SK-N-SH (cell line): ENCODE measurements at regions of chr3 and their contacts with region 1.

Region 1: DNA sequence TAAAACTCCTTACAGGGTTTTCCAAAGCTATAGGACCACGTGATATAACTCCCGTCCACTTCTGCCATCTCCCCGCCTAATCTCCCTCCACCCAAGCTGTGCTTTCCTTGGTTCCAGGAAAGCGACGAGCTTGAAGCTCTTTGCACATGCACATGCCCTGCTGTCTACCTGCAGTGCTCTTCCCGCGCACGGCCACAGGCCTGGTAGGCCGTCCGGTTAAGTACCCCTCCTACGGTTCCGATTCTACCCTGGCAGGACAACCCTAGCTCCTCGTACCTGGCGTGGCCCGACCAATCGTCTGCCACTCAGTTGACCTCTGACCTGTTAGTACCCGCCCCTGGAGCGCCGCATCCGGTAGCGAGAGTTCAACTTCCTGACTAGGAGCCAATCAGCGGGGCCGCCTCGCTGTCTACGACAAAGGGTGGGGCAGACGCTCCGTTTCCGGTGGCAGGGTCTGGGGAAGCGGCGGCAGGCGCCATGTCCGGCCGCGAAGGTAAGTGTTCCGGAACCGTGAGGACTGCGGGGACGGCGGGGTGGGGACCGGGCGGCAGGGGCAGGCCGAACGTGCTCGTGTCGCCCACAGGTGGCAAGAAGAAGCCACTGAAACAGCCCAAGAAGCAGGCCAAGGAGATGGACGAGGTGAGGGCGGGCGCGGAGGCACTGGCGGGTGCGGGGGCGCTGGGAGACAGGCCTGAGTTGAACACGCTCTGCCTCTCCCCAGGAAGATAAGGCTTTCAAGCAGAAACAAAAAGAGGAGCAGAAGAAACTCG is at the starts of genes CCDC51 and TMA7:
- DNase-seq: peak; percentile 98
- H3K4me3 ChIP-seq: peak within 1 kb of the TSS; percentile 79 to 86
- H3K27ac ChIP-seq: peak within 1 kb of the TSS; percentile 64 to 86
- H3K4me1 ChIP-seq: peaks cover 8 to 20% of the 10 kb centered on the region in 2 experiments
- H3K27me3 ChIP-seq: no peaks in the 10 kb centered on the region
- CTCF ChIP-seq: no peak
- EP300 ChIP-seq: 0 out of 4 replicates have a peak, but pooled peaks of 1 of the 2 experiments have one; percentile 20
- RAD21 ChIP-seq: no peak
- polyA plus RNA-seq, gene CCDC51: 24.2 and 29.6 TPM in 2 replicates
- polyA plus RNA-seq, gene TMA7: 393 and 438 TPM in 2 replicates

Region 2: DNA sequence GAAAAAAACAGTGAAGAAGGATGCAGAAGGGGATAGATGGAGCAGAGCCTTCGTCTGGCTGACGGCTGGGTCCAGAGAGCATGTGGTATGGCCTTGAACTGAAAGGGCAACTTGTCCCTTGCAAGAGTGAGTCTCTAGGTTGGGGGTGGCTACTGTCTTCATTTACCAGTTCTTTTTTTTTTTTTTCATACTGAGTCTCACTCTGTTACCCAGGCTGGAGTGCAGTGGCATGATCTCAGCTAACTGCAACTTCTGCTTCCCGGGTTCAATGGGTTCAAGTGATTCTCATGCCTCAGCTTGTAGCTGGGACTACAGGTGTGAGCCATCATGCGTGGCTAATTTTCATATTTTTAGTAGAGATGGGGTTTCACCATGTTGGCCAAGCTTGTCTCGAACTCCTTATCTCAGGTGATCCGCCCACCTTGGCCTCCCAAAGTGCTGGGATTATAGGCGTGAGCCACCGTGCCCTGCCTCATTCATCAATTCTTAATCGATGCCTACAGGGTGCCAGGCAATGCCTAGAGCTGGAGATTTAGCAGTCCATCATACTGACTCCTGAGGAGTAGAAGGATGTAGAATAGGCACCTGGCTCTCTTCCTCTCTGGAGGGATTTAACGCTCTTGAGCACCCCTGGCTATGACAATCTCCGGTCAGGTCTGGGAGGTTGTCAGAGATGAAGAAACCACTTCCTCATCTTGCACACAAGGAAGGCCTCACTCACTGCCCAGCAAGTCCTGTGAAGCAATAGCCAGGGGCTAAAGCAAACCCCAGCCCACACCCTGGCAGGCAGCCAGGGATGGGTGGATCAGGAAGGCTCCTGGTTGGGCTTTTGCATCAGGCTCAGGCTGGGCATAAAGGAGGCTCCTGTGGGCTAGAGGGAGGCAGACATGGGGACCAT is 217.1 kb before region 1 on chr3 and contains the start of gene CAMP:
- CTCF ChIA-PET with region 1: interaction called, 120 read pairs
- POLR2A ChIA-PET with region 1: no interaction called
- DNase-seq: peak; percentile 72
- H3K4me3 ChIP-seq: no peak within 1 kb of the TSS
- H3K27ac ChIP-seq: no peak within 1 kb of the TSS
- H3K4me1 ChIP-seq: peaks cover 0 to 7% of the 10 kb centered on the region in 2 experiments; a peak in 1 of 4 replicates
- H3K27me3 ChIP-seq: peaks cover 7% of the 10 kb centered on the region; the same call in 1 of the 2 replicates
- CTCF ChIP-seq: no peak
- EP300 ChIP-seq: no peak
- RAD21 ChIP-seq: no peak
- polyA plus RNA-seq, gene CAMP: not detected in 2 replicates

Region 3: DNA sequence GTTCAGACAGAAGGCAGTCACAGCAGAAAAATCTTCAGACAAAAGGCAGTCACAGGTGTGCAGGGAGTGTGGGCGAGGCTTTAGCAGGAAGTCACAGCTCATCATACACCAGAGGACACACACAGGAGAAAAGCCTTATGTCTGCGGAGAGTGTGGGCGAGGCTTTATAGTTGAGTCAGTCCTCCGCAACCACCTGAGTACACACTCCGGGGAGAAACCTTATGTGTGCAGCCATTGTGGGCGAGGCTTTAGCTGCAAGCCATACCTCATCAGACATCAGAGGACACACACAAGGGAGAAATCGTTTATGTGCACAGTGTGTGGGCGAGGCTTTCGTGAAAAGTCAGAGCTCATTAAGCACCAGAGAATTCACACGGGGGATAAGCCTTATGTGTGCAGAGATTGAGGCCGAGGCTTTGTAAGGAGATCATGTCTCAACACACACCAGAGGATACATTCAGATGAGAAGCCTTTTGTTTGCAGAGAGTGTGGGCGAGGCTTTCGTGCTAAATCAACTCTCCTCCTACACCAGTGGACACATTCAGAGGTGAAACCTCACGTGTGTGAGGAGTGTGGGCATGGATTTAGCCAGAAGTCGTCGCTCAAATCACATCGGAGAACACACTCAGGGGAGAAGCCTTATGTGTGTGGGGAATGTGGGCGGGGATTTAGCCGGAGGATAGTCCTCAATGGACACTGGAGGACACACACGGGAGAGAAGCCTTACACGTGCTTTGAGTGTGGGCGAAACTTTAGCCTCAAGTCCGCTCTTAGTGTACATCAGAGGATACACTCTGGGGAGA is 171.4 kb before region 1 on chr3:
- CTCF ChIA-PET with region 1: interaction called, 379 read pairs
- POLR2A ChIA-PET with region 1: interaction called, 4 read pairs
- DNase-seq: no peak
- H3K4me3 ChIP-seq: no peak overlapping the region
- H3K27ac ChIP-seq: no peak overlapping the region
- H3K4me1 ChIP-seq: no peaks in the 10 kb centered on the region; a peak in 1 of 4 replicates
- H3K27me3 ChIP-seq: no peaks in the 10 kb centered on the region
- CTCF ChIP-seq: no peak
- EP300 ChIP-seq: no peak
- RAD21 ChIP-seq: no peak

Region 4: DNA sequence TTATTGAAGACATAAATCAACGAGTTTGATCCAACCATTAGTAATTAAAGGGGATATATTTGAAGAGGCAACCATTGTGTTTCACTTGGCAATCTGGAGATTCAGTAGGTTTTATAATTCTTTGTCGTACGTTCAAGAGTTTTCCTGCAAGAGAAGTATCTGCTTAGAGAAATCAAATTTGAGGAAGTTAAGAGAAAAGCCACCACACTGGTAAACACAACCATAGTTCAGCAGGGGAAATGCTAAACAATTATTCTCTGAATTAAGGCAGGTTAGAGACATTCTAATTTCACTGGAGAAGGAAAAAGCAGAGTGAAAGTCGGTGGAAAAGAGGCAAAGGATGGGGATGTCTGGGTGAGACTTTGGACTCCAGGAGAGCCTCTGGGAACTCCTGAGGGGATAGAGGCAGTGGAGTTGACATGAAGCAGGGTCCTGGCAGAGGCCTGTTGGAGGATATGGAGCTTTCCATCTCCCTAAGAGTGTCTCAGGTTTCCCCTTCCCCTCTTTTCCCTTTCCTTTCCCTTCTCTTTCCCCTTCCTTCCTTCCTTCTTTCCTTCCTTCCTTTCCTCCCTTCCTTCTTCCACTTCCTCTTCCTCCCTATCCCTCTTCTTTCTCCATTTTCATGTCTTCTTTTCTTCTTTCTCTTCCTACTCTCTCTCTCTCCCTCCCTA is 133.0 kb before region 1 on chr3:
- CTCF ChIA-PET with region 1: interaction called, 18 read pairs
- POLR2A ChIA-PET with region 1: no interaction called
- DNase-seq: no peak
- H3K4me3 ChIP-seq: no peak overlapping the region
- H3K27ac ChIP-seq: no peak overlapping the region
- H3K4me1 ChIP-seq: peaks cover 0 to under 1% of the 10 kb centered on the region in 2 experiments; a peak in 1 of 4 replicates
- H3K27me3 ChIP-seq: no peaks in the 10 kb centered on the region; the same call in 1 of the 2 replicates
- CTCF ChIP-seq: no peak
- EP300 ChIP-seq: no peak
- RAD21 ChIP-seq: no peak

Region 5: DNA sequence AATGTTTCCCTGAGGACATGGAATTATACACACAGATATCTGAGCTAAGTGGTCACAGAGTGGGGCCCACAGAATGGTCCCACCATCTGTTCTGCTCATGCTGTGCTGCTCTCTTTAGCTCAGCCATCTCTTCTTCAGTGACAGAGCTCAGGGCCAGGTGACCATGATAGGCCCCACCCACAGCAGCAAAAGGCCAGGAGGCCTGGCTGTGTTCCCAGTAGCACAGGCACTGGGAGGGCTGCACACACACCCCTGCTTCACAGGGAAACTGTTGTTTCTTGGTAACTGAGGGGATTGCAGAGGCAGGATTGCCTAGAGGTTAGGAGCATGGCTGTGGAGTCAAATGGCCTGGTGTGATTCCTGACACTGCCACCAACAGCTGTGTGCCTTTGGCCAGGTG is 72.8 kb before region 1 on chr3:
- CTCF ChIA-PET with region 1: interaction called, 23 read pairs
- POLR2A ChIA-PET with region 1: no interaction called
- DNase-seq: peak; percentile 69
- H3K4me3 ChIP-seq: no peak overlapping the region
- H3K27ac ChIP-seq: peak overlapping the region in 1 of 2 experiments; percentile 74; a peak in 2 of 4 replicates
- H3K4me1 ChIP-seq: peaks cover 0 to 15% of the 10 kb centered on the region in 2 experiments; a peak in 1 of 4 replicates
- H3K27me3 ChIP-seq: no peaks in the 10 kb centered on the region
- CTCF ChIP-seq: no peak
- EP300 ChIP-seq: peak in 1 of 2 experiments; percentile 15; a peak in 1 of 4 replicates
- RAD21 ChIP-seq: no peak; the same call in 1 of the 2 replicates

Region 6: DNA sequence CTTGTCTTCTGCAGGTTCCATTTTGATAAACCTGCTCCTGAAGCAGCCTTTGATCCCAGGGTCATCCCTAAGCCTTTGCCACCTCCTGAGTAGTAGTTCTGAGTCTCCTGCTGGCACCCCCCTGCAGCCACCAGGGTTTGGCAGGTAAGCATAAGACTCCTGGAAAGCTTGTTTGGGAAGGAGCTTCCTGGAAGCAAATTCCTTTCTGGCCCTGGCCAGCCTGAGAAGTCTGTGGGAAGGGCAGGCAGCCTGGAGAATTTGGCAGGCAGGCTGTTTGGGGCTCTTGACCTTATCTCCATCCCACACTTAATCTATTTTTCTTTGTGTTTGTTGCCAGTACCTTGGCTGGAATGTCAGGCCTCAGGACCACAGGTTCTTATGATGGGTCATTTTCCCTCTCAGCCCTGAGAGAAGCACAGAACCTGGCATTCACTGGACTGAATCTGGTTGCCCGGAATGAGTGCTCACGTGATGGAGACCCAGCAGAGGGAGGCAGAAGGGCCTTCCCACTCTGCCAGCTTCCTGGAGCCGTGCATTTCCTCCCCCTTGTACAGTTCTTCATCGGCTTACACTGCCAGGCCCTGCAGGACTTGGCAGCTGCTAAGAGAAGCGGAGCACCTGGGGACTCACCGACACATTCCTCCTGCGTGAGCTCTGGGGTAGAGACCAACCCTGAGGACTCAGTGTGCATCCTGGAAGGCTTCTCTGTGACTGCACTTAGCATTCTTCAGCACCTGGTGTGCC is 19.9 kb after region 1 on chr3:
- CTCF ChIA-PET with region 1: interaction called, 37 read pairs
- POLR2A ChIA-PET with region 1: no interaction called
- DNase-seq: no peak
- H3K4me3 ChIP-seq: no peak overlapping the region
- H3K27ac ChIP-seq: no peak overlapping the region
- H3K4me1 ChIP-seq: peaks cover 0 to 13% of the 10 kb centered on the region in 2 experiments; a peak in 1 of 4 replicates
- H3K27me3 ChIP-seq: no peaks in the 10 kb centered on the region
- CTCF ChIP-seq: no peak
- EP300 ChIP-seq: no peak
- RAD21 ChIP-seq: no peak

Region 7: DNA sequence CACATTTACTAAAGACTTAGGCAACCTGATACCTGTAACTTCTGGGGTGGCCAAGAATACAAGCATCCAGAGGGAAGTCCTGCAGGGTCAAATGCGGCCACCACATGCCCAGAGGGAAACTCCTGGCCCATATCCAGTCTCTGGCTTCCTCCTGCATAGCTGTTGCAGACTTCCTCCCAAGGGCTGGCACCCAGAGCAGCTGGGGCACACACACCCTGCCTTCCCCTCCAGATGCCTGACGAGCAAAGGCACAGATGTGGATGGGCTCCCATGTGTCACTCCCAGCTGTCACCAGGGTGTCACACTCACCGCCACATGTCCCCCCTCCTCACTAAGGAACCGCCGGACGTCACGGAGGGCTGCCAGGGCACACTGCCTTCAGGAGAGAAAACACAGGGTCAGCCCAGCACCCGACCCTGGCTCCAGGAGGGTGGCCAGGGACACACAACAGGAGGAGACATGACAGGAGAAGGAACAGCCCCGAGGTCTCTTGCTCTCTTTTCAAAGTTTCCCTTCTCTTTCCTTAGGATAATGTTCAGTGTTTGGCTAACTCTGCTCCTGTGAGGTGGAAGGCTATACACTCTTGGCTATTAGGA is 103.4 kb after region 1 on chr3:
- CTCF ChIA-PET with region 1: interaction called, 24 read pairs
- POLR2A ChIA-PET with region 1: no interaction called
- DNase-seq: peak; percentile 71
- H3K4me3 ChIP-seq: no peak overlapping the region
- H3K27ac ChIP-seq: peak overlapping the region in 1 of 2 experiments; percentile 45; a peak in 2 of 4 replicates
- H3K4me1 ChIP-seq: peaks cover 0 to 12% of the 10 kb centered on the region in 2 experiments; a peak in 1 of 4 replicates
- H3K27me3 ChIP-seq: no peaks in the 10 kb centered on the region
- CTCF ChIP-seq: no peak
- EP300 ChIP-seq: peak in 1 of 2 experiments; percentile 30; a peak in 1 of 4 replicates
- RAD21 ChIP-seq: no peak